Posterior cingulate gyrus (tissue), 11 donors: ENCODE measurements at regions of chr7 and their contacts with region 1.

Region 1: DNA sequence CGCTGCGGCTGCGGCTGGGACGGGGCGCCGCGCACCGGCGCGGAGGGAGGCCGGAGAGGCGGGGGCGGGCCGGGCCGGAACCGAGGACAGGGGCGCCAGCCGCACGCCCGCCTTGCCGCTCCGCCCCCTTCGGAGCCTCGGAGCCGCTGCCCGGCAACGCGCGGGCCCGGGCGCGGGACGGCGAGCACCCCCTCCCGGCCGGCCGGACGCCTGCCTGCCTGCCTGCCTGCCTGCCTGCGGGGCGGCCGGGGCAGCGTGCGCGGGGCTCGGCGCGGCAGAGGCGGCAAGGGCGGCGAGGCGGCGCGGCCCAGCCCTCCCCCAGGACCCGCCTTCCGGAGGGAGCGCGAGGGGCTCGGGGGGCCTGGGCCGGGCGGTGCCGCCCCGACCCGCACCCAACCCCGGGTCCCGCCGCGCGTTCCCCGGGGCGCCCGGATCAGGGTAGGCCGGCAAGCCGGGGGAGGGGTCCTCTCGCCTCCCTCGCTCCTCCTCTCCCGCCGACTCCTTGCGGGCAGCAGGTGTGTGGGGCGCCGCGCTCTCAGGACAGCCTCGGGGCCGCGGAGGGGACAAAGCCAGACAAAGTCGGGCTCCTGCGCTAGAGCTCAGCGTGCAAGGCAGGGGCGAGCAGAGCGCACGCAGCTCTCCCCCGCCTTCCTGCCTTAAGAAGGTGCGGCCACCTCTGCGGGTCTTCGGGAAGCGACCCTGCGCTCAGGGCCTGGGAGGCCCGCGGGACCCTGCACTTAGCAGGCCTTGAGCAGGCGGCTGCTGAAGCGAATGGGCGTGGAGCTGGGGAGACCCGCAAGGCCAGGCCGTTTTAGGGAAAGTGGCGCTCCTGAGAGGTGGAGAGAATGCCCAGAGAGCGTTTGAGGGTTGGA is at the start of gene KIAA1549:
- DNase-seq: peak in 9 of 10 donors; percentile 37 to 94 (median 54)

Region 2: DNA sequence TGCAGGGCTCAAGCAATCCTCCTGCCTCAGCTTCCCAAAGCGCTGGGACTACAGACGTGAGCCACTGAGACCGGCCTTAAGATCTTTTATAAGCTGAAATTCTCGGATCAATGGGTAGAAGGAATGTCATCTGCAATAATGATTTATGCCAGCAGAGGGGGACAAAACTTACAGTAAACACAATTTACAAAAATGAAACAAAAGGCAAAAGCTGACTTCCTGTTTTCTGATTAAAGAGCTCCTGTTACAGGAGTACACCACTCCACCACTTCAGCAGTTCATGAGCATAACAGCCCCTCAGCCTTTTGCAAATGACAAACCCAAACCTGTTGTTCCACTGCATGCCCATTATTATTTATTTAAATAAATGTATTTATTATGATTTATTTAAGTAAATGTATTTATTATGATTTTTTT is 95.1 kb before region 1 on chr7:
- intact Hi-C with region 1: loop called (anchors 10 kb)
- DNase-seq: no peak

Region 3: DNA sequence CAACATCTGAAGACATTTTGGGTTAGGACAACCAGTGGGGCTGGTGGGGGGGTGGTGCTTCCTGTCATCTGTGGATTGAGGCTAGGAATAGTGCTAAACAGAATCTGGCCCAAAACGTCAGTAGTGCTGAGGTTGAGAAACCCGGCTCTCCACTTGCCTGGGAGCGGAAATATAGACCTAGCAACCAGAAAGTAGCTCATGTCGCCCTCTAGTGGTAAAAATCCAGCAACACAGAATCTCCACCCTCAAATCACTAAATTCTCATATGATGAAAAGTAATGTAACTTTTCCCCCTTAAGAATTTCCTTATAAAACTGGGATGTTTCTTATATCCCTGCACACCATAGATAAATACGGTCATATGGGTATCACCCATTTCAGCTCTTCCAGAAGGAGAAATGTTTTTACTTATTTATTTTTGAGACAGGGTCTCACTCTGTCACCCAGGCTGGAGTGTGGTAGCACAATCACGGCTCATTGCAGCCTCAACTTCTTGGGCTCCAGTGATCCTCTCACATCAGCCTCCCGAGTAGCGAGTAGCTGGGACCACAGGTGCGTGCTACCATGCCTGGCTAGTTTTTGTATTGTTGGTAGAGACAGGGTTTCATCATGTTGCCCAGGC is 93.6 kb after region 1 on chr7:
- intact Hi-C with region 1: no loop called
- DNase-seq: peak in 7 of 10 donors; percentile 36 to 88 (median 48)